H1 (cell line): ENCODE measurements at regions of chr22 and their contacts with region 1.

Region 1: GRCh38 chr22:38927033-38927781 is 30.2 kb upstream of the APOBEC3A start:
- DNase-seq: peak; percentile 57 to 86
- H3K4me3 ChIP-seq: peak overlapping the region; percentile 12 to 45 (median 18); a peak in 5 of 8 replicates
- H3K27ac ChIP-seq: no peak overlapping the region
- H3K4me1 ChIP-seq: peaks cover 0 to 5% (median 3%) of the 10 kb centered on the region in 4 experiments; a peak in 4 of 7 replicates
- H3K27me3 ChIP-seq: no peaks in the 10 kb centered on the region
- CTCF ChIP-seq: peak; percentile 81 to 87 (median 85)
- EP300 ChIP-seq: no peak
- POLR2A ChIP-seq: no peak
- RAD21 ChIP-seq: peak; percentile 61 to 73

Region 2: DNA sequence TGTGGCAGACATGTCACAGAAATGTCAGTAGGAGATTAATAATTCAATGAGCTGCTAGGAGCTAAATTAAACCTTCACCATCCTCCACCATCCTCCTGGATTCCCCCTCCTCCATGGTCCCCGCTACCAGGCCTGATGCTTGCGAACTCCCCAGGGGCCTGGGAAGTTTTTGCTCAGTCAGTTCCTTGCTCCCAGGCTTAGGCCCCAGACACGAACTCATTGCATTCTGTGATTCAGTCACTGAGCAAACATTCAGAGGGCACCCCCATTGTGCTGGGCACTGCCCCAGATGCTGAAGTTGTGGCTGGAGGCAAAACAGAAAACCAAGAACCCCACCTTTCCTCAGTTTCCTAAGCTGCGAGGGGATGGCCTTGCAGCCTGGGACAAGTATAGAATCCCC is 97.7 kb before region 1 on chr22:
- CTCF ChIA-PET with region 1: no interaction called
- POLR2A ChIA-PET with region 1: no interaction called
- DNase-seq: no peak
- H3K4me3 ChIP-seq: no peak overlapping the region
- H3K27ac ChIP-seq: no peak overlapping the region
- H3K4me1 ChIP-seq: peaks cover 0 to 6% (median 2%) of the 10 kb centered on the region in 4 experiments; a peak in 2 of 7 replicates
- H3K27me3 ChIP-seq: no peaks in the 10 kb centered on the region
- CTCF ChIP-seq: no peak
- EP300 ChIP-seq: no peak
- POLR2A ChIP-seq: no peak
- RAD21 ChIP-seq: no peak

Region 3: GRCh38 chr22:38843201-38843715 is 83.9 kb before region 1 on chr22:
- CTCF ChIA-PET with region 1: no interaction called
- POLR2A ChIA-PET with region 1: no interaction called
- DNase-seq: peak; percentile 47 to 68
- H3K4me3 ChIP-seq: peak overlapping the region; percentile 48 to 70 (median 50)
- H3K27ac ChIP-seq: no peak overlapping the region
- H3K4me1 ChIP-seq: peaks cover 0 to 7% (median 3%) of the 10 kb centered on the region in 4 experiments; a peak in 4 of 7 replicates
- H3K27me3 ChIP-seq: peaks cover 16 to 47% (median 38%) of the 10 kb centered on the region in 4 experiments
- CTCF ChIP-seq: peak in 2 of 3 experiments; percentile 31 to 36; a peak in 3 of 4 replicates
- EP300 ChIP-seq: no peak
- POLR2A ChIP-seq: peak in 1 of 2 experiments; percentile 0; a peak in 1 of 3 replicates
- RAD21 ChIP-seq: peak in 1 of 2 experiments; percentile 7; a peak in 1 of 4 replicates

Region 4: GRCh38 chr22:38881464-38881871 is 45.7 kb before region 1 on chr22:
- CTCF ChIA-PET with region 1: interaction called, 11 read pairs
- POLR2A ChIA-PET with region 1: no interaction called
- DNase-seq: no peak
- H3K4me3 ChIP-seq: no peak overlapping the region
- H3K27ac ChIP-seq: no peak overlapping the region
- H3K4me1 ChIP-seq: no peaks in the 10 kb centered on the region
- H3K27me3 ChIP-seq: no peaks in the 10 kb centered on the region
- CTCF ChIP-seq: no peak
- EP300 ChIP-seq: no peak
- POLR2A ChIP-seq: no peak
- RAD21 ChIP-seq: no peak

Region 5: GRCh38 chr22:38943201-38943600 is 16.0 kb after region 1 on chr22:
- CTCF ChIA-PET with region 1: interaction called, 15 read pairs
- POLR2A ChIA-PET with region 1: no interaction called
- DNase-seq: no peak
- H3K4me3 ChIP-seq: no peak overlapping the region
- H3K27ac ChIP-seq: no peak overlapping the region
- H3K4me1 ChIP-seq: peaks cover 0 to 3% (median 0%) of the 10 kb centered on the region in 4 experiments; a peak in 4 of 7 replicates
- H3K27me3 ChIP-seq: peaks cover 0 to 5% (median 0%) of the 10 kb centered on the region in 4 experiments; a peak in 2 of 7 replicates
- CTCF ChIP-seq: peak in 2 of 3 experiments; percentile 26 to 27; a peak in 2 of 4 replicates
- EP300 ChIP-seq: no peak
- POLR2A ChIP-seq: no peak
- RAD21 ChIP-seq: peak in 1 of 2 experiments; percentile 15; a peak in 1 of 4 replicates